Left colon (tissue), 2 donors: ENCODE measurements at regions of chr9 and their contacts with region 1.

Region 1: GRCh38 chr9:86939321-86939720 is 8.0 kb downstream of the GAS1 start:
- DNase-seq: no peak
- ATAC-seq: no peak

Region 2: GRCh38 chr9:86494644-86495111 is 444.6 kb before region 1 on chr9:
- intact Hi-C with region 1: loop called in 1 of 2 experiments (anchors 5 kb)
- DNase-seq: no peak
- ATAC-seq: no peak

Region 3: GRCh38 chr9:87099407-87099806 is 160.1 kb after region 1 on chr9:
- intact Hi-C with region 1: no loop called
- DNase-seq: no peak
- ATAC-seq: no peak